ENCODE measurements at regions of chr3 and their contacts with region 1.

Region 1: GRCh38 chr3:87350364-87351199 is 74.2 kb upstream of the POU1F1 start:
- DNase-seq: peak in 2 of 10 donors; percentile 18 to 30
- H3K4me3 ChIP-seq: no peak overlapping the region
- H3K27ac ChIP-seq: no peak overlapping the region
- H3K27me3 ChIP-seq: no peaks in the 10 kb centered on the region
- CTCF ChIP-seq: peak; percentile 71 to 97 (median 87)

Region 2: DNA sequence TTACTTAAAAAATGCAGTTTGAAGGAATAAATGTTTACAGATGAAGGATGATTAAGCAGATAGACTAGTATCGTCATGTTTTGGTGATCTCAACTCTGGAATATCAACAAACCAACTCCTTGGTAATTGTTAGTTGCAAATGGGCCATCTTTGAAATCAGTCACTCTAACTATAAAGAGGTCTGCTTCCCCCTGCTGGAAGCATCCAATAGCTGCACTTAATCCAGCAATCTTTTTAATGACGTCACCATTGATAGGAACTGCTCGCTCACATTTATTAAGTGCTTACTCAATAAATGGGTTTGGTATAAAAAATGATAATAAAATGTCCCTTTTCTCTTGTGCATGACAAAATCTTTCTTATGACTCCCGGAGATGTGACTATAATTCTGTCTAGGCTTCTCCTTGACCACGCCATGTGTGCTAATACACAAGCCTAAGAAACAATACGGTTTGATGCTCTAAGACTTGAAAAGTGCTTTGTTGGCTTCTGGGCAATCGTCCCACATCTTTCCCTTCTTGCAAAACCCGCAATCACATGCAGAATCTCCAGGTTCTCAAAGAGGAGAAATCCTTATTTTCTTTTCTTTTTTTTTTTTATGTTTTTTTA is 153.4 kb after region 1 on chr3:
- intact Hi-C with region 1: loop called in 1 of 2 experiments (anchors 10 kb)
- DNase-seq: peak in 1 of 10 donors; percentile 13
- H3K4me3 ChIP-seq: no peak overlapping the region
- H3K27ac ChIP-seq: no peak overlapping the region
- H3K27me3 ChIP-seq: no peaks in the 10 kb centered on the region
- CTCF ChIP-seq: peak; percentile 23 to 71 (median 58)